ENCODE measurements at regions of chr5 and their contacts with region 1.

Region 1: GRCh38 chr5:95543017-95543705 is 11.6 kb downstream of the SKIC3 start:
- DNase-seq: no peak
- ATAC-seq: no peak
- H3K4me3 ChIP-seq: no peak overlapping the region
- H3K4me3 Mint-ChIP-seq: no peak overlapping the region
- H3K27ac ChIP-seq: no peak overlapping the region
- H3K27ac Mint-ChIP-seq: no peak overlapping the region
- H3K4me1 ChIP-seq: no peaks in the 10 kb centered on the region
- H3K4me1 Mint-ChIP-seq: peaks cover 23% of the 10 kb centered on the region
- H3K27me3 ChIP-seq: no peaks in the 10 kb centered on the region
- H3K27me3 Mint-ChIP-seq: no peaks in the 10 kb centered on the region
- CTCF ChIP-seq: no peak

Region 2: GRCh38 chr5:95511606-95512005 is 31.6 kb before region 1 on chr5:
- CTCF ChIA-PET with region 1: no interaction called
- POLR2A ChIA-PET with region 1: no interaction called
- intact Hi-C with region 1: loop called in 1 of 2 experiments (anchors 1 kb)
- DNase-seq: no peak
- ATAC-seq: no peak
- H3K4me3 ChIP-seq: no peak overlapping the region
- H3K4me3 Mint-ChIP-seq: no peak overlapping the region
- H3K27ac ChIP-seq: no peak overlapping the region
- H3K27ac Mint-ChIP-seq: no peak overlapping the region
- H3K4me1 ChIP-seq: no peaks in the 10 kb centered on the region
- H3K4me1 Mint-ChIP-seq: no peaks in the 10 kb centered on the region
- H3K27me3 ChIP-seq: no peaks in the 10 kb centered on the region
- H3K27me3 Mint-ChIP-seq: no peaks in the 10 kb centered on the region
- CTCF ChIP-seq: no peak

Region 3: DNA sequence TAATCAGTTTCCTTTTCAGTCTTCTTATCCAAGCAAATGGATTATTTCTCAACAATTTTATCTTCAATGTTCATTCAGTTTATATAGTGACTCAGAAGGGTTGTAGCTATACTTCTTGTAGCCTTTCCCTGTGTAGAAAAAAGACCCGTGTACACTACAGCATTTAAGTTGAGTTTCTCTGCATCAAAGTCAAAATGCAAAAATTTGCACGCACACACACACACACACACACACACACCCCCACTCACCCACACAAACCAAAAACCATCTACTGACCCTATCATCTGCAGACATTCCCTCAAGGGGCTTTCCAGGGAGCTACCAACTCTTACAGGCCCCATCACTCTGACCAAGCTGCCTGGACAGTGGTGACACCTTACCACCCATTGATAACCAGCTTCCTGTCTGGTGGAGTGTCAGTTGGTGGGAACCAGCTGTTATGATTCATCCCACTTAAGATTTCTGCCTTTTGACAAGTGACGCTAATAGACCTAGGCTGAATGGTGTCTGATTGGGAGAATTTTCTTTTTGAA is 430.7 kb after region 1 on chr5:
- CTCF ChIA-PET with region 1: no interaction called
- POLR2A ChIA-PET with region 1: no interaction called
- intact Hi-C with region 1: no loop called
- DNase-seq: peak in 5 of 9 experiments; percentile 8 to 79 (median 28)
- ATAC-seq: peak; percentile 62
- H3K4me3 ChIP-seq: no peak overlapping the region
- H3K4me3 Mint-ChIP-seq: no peak overlapping the region
- H3K27ac ChIP-seq: no peak overlapping the region
- H3K27ac Mint-ChIP-seq: no peak overlapping the region
- H3K4me1 ChIP-seq: no peaks in the 10 kb centered on the region
- H3K4me1 Mint-ChIP-seq: no peaks in the 10 kb centered on the region
- H3K27me3 ChIP-seq: no peaks in the 10 kb centered on the region
- H3K27me3 Mint-ChIP-seq: peaks cover 6% of the 10 kb centered on the region
- CTCF ChIP-seq: no peak

Region 4: GRCh38 chr5:95984287-95984938 is 441.3 kb after region 1 on chr5:
- CTCF ChIA-PET with region 1: no interaction called
- POLR2A ChIA-PET with region 1: no interaction called
- intact Hi-C with region 1: no loop called
- DNase-seq: no peak
- ATAC-seq: no peak
- H3K4me3 ChIP-seq: no peak overlapping the region
- H3K4me3 Mint-ChIP-seq: no peak overlapping the region
- H3K27ac ChIP-seq: no peak overlapping the region
- H3K27ac Mint-ChIP-seq: no peak overlapping the region
- H3K4me1 ChIP-seq: no peaks in the 10 kb centered on the region
- H3K4me1 Mint-ChIP-seq: no peaks in the 10 kb centered on the region
- H3K27me3 ChIP-seq: no peaks in the 10 kb centered on the region
- H3K27me3 Mint-ChIP-seq: peaks cover 2% of the 10 kb centered on the region
- CTCF ChIP-seq: no peak